GM13976 (cell line): ENCODE measurements at regions of chr16 and their contacts with region 1.

Region 1: GRCh38 chr16:68704232-68704867 is 32.7 kb upstream of the CDH1 start:
- DNase-seq: peak; percentile 84
- CTCF ChIP-seq: peak; percentile 86

Region 2: GRCh38 chr16:68605746-68606145 is 98.6 kb before region 1 on chr16:
- in situ Hi-C with region 1: no loop called
- DNase-seq: no peak
- CTCF ChIP-seq: no peak

Region 3: GRCh38 chr16:68800257-68800875 is 96.0 kb after region 1 on chr16:
- in situ Hi-C with region 1: loop called (anchors 10 kb)
- DNase-seq: peak; percentile 73
- CTCF ChIP-seq: peak; percentile 67

Region 4: DNA sequence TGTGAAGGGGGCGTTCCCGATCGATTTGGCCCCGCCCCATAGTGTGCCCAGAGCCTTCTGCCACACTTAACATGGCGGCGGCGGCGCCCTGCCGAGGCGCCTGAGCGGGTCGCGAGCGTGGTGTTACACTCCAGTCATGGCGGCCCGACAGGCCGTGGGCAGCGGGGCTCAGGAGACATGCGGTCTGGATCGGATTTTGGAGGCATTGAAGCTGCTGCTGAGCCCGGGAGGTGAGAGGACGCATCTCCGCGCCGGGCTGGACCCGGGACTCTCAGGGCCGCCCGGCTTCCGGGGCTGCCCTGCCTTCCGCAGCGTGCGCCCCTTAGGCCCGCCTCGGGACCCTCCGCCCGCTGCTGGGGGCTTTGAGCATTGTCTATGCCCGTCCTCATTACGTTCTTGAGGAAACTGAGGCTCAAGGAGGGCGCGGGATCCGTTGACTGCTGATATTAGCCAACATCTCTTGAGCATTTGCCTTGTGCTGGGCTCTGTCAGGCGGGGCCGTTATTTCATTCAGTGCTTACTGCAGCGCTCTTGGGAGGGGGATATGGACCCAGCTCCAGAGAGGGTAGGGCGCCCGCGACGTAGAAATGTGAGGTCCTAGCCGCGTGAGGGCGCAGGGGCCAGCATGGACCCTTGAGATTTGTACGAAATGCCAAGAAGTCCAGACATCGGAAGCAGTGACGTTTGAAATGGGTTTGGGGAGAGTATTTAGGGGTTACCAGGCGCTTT is 139.3 kb after region 1 on chr16 and contains the start of gene TANGO6:
- in situ Hi-C with region 1: no loop called
- DNase-seq: peak; percentile 93
- CTCF ChIP-seq: peak; percentile 30

Region 5: DNA sequence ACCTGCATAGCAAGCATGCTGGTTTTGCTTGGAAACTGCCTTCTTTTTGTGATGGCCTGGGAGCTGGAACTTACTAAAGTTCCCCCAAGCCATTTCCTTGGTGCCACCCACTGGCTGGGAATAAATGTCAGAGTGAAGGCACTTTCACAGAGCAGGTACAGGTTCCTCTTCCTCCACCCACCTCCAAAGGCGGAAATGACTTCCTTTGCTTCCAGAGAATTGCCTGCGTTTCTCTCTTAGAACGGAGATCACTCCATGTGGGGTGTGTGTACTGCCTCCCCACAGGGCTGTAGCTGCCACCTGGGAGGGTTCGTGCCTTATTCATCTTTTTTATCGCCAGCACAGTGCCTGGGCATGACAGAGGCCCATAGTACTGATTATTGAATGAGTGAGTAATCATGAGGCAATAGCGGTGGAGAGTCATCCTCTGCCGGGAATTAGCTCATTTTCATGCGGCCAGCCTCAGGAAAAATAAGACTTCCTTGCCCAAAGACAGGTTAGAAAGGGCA is 368.9 kb after region 1 on chr16:
- in situ Hi-C with region 1: no loop called
- DNase-seq: no peak
- CTCF ChIP-seq: no peak

Region 6: DNA sequence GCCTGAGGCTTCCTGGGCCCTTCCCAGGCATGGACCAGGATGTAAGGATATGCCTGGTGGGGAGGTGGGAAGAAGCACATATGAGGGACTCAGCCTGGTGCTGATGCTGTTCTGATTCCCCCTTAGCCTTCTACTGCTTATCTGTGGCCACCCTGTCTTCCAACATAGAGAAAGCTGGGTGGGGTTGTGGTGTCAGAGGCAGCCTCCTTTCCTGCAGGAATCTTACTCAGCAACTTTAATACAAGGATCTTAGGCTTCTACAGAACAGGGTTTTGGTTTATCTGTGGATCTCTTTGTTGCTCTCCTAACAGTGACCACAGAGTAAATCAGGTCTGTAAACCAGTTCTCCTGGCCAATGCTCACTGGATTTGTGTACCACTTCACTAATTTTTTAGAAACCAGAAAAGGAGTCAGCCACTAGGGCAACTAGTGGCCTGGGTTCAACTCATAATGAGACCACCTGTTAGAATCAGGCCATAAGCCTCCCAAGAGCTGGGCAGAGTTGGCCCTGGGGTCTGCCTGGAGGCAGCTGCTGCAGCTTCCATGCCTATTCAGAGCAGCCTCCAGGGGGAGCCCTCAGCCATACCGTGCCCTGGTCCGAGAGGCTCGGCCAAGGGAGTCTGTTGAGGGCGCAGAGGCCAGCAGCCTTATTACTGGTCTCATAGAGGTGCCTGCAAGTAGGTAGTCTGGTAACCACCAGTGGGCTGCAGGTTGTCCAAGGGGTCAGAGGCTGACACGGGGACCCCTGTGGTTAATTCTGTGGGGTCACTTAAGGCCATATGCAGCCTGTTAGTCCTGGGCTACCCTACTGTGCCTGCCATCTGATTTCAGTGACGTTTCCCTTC is 408.2 kb after region 1 on chr16:
- in situ Hi-C with region 1: loop called (anchors 10 kb)
- DNase-seq: peak; percentile 81
- CTCF ChIP-seq: peak; percentile 75